SK-N-SH (cell line): ENCODE measurements at regions of chr2 and their contacts with region 1.

Region 1: DNA sequence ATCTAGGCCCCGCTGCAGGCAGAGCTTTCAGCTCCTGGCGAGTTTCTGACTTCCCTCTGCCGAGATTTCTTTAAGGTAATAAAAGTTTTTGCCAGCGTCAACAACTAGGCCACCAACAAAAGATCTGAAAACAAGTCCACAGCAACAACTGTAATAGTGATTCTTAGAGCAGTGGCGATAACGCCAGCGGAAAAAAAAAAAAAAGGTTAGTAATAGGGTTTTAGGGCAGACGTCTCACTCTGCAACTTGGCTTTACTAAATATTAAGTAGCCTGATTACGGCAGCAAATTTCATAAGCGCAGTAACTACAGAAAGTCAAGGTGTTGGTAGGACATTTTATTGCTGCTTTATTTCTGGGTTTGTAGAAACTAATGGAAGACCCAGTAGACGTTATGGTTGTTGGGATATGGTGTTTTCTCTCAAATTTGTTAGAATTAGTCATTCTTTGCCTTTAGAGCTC is 481 bp downstream of the SLC30A6 start:
- DNase-seq: no peak
- H3K4me3 ChIP-seq: peak overlapping the region; percentile 62 to 93
- H3K27ac ChIP-seq: peak overlapping the region; percentile 79 to 84; a peak in 3 of 4 replicates
- H3K4me1 ChIP-seq: peaks cover 5 to 9% of the 10 kb centered on the region in 2 experiments; a peak in 2 of 4 replicates
- H3K27me3 ChIP-seq: no peaks in the 10 kb centered on the region
- CTCF ChIP-seq: no peak
- EP300 ChIP-seq: no peak
- RAD21 ChIP-seq: no peak

Region 2: DNA sequence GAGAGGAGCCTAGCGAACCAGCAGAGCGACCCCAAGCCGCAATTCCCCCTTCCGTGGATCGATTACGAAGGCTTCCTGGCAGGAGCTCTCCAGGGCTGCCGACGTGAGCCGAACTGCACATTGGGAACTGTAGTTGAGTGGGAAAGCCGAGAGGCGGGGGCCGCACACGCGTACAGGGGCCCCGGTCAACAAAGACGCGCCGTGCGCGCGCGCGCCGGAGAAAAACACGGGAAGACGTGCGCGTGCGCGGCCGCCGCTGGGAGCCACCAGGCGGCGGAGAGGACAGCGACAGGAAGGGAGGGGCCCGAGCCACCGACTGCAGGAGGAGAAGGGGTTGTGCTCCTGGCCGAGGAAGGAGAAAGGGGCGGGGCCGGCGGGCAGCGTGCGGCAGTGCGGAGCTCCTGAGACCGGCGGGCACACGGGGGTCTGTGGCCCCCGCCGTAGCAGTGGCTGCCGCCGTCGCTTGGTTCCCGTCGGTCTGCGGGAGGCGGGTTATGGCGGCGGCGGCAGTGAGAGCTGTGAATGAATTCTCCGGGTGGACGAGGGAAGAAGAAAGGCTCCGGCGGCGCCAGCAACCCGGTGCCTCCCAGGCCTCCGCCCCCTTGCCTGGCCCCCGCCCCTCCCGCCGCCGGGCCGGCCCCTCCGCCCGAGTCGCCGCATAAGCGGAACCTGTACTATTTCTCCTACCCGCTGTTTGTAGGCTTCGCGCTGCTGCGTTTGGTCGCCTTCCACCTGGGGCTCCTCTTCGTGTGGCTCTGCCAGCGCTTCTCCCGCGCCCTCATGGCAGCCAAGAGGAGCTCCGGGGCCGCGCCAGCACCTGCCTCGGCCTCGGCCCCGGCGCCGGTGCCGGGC is 102.6 kb before region 1 on chr2 and contains the start of gene SPAST:
- CTCF ChIA-PET with region 1: interaction called, 13 read pairs
- POLR2A ChIA-PET with region 1: interaction called, 24 read pairs
- DNase-seq: peak; percentile 99
- H3K4me3 ChIP-seq: peak within 1 kb of the TSS; percentile 65 to 79
- H3K27ac ChIP-seq: peak within 1 kb of the TSS; percentile 85 to 88
- H3K4me1 ChIP-seq: peaks cover 9 to 10% of the 10 kb centered on the region in 2 experiments; a peak in 3 of 4 replicates
- H3K27me3 ChIP-seq: no peaks in the 10 kb centered on the region
- CTCF ChIP-seq: peak; percentile 45
- EP300 ChIP-seq: 0 out of 4 replicates have a peak, but pooled peaks of 1 of the 2 experiments have one; percentile 5
- RAD21 ChIP-seq: no peak; the same call in 1 of the 2 replicates
- polyA plus RNA-seq, gene SPAST: 6.1 and 6.8 TPM in 2 replicates

Region 3: DNA sequence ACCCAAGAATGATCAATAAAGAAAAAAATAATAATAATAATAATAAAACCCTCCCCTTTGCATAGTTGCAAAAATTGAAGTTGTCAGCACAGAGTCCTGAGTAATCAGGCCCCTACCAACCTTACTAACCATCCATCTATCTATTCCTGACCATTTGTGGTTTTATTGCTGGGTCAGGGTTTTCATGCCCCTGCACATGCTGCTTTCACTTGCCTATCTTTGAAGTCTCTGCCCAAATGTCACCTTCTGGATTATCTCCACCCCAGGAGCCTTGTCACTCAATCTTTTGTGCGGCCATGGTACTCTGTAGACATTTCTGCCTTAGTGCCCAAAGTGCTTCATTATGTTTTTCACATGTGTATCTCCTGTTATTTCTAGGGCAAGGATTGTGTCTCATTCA is 34.7 kb after region 1 on chr2:
- CTCF ChIA-PET with region 1: no interaction called
- POLR2A ChIA-PET with region 1: no interaction called
- DNase-seq: no peak
- H3K4me3 ChIP-seq: no peak overlapping the region
- H3K27ac ChIP-seq: no peak overlapping the region
- H3K4me1 ChIP-seq: no peaks in the 10 kb centered on the region
- H3K27me3 ChIP-seq: no peaks in the 10 kb centered on the region
- CTCF ChIP-seq: no peak
- EP300 ChIP-seq: no peak
- RAD21 ChIP-seq: no peak